Left cardiac atrium (tissue), 4 donors: ENCODE measurements at regions of chr17 and their contacts with region 1.

Region 1: DNA sequence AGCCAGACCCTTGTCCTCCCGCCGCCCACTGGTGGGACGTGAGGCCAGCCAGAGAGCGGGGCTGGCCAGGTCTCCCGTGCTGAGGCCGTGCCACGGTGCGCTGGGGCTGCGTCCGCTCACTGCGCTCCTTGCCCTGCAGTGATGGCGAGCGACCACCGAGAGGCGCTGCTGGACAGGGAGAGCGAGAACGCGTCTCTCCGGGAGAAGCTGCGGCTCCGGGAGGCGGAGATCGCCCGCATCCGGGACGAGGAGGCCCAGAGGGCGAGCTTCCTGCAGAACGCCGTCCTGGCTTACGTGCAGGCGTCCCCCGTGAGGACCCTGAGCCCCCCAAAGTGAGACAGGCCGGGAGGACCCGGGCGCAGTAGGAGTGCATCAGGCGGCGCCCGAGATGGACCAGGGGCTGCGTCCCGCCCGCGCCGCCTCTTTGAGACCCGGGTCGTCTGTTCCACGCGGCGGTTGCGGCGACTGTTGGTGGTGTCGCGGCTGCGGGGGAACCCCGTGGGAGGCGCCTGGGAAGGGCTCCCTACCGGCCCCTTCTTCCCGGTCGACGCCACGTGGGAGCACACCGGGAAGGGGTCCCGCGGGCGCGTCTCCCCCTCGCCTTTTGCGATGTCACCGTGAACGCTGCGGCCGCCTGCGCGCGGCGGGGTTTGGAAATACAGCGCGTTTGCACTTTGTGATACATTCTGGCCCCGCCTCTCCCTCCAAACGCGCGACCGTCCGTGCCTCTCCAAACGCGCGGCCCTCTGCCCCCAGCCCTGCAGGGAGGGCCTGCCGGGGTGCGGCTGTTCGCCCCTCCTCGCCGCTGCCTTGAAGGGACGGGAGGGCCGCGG is 792 bp upstream of the RAC3 start:
- DNase-seq: peak; percentile 87
- ATAC-seq: peak; percentile 82 to 86

Region 2: GRCh38 chr17:82065638-82066303 is 35.1 kb after region 1 on chr17 and contains the start of gene DUS1L:
- intact Hi-C with region 1: no loop called
- DNase-seq: peak; percentile 71
- ATAC-seq: peak; percentile 80 to 84
- total RNA-seq, gene DUS1L: 59.2 to 65.4 TPM

Region 3: DNA sequence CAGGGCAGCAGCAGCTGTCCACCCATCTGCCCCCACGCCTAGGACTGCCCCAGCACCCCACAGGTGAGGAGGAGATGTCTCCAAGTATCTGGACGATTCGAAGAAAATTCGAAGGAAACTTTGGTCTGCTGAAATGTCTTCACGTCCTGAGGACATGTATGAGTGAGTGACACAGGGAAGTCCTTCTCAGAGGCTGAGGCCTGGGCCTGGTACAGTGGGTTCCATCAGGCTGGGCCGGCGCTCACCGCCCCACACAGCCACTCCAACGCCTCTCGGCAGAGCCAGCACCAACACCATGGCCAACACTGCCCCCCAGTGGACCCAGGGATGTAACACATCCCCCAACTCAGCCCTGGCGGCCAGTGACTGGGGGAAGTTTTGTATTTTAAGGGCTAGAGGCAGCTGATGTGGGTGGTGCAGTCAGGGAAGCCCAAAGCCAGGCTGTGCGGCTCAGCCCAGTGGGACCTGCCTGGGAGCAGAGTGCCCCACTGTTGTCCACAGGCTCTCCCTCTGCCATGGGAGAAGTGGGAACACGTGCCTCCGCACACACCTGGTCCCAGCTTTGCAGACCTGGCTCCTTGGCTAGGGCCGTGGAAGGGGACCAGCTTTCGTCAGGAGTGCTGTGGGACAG is 123.2 kb after region 1 on chr17:
- intact Hi-C with region 1: loop called (anchors 1 to 2 kb)
- DNase-seq: peak; percentile 83
- ATAC-seq: peak; percentile 92 to 93